Activated CD8-positive, alpha-beta memory T cell treated with anti-CD3 and anti-CD28 coated beads, Interleukin-2, amount 10 ng/mL, durations not matched to agents 7 days and 5 days (primary cell): ENCODE measurements at regions of chr6 and their contacts with region 1.

Region 1: DNA sequence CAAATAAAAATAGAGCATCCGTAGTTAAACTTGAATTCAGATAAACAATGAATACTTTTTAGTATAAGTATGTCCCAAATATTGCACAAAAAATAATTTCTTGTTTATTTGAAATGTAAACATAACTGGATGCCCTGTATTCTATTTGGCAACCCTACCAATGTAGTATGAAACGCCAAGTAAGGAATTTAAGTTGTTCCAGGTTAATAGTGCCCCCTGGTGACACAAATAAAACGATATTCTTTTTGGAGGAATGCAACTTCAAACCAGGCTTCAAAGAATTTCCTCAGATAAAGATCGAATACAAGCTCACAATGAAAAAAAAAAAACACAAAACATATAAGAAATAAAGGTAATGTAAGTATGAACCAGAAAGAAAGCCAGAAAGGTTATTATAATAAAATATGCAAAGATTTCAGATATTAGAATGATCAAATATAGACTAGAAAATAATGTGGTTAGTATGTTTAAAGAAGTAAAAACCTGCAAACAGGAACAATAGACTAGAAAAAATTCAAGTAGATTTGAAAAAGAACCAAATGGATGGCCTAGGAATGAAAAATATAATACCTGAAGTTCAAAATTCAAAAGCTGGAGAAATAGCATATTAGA is 18.4 kb upstream of the AKAP7 start:
- DNase-seq: no peak
- ATAC-seq: no peak
- H3K4me3 Mint-ChIP-seq: no peak overlapping the region
- H3K27ac Mint-ChIP-seq: no peak overlapping the region
- H3K4me1 Mint-ChIP-seq: no peaks in the 10 kb centered on the region
- H3K27me3 Mint-ChIP-seq: peaks cover 4% of the 10 kb centered on the region

Region 2: DNA sequence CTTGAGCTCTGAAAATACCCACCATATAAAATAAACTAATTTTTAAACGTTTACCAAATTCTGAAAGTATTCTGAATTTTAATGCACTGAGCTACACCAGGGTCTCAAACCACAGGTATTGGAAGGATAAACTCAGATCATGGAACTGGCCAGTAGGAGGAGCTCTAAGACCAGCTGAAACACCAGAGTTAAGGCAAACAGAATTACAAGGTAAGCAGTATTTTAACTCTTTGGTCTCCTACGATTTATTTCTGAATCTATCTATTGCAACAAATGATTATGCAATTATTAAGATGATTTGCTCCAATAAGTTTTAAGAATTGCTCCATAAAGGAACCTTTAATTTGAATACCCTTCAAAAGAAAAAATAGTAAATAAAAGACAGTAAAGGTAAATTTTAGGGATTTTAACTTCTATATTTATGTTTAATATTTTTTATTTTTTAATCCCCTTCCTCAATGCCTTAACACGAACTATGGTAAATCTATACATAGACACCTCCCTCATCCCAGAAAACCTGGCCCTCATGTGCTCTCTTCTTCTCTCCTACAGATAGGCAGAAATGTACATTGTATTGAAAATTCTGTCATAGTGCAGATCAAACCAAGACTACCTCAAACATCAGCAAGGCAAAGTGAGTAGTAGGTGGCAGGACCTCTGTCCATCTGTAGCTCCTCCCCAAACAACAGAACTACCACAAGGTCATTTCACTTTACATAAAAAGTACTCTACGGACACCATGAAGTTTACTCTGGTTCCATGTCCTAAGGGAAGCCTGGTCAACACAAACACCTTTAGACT is 231.3 kb before region 1 on chr6:
- CTCF ChIA-PET with region 1: interaction called, 55 read pairs
- DNase-seq: peak; percentile 79
- ATAC-seq: peak; percentile 78
- H3K4me3 Mint-ChIP-seq: no peak overlapping the region
- H3K27ac Mint-ChIP-seq: no peak overlapping the region
- H3K4me1 Mint-ChIP-seq: no peaks in the 10 kb centered on the region
- H3K27me3 Mint-ChIP-seq: no peaks in the 10 kb centered on the region